ENCODE measurements at regions of chr15 and their contacts with region 1.

Region 1: GRCh38 chr15:44545913-44546802 is 9.2 kb downstream of the EIF3J start:
- DNase-seq: peak; percentile 37
- H3K4me3 ChIP-seq: no peak overlapping the region
- H3K27ac ChIP-seq: peak overlapping the region; percentile 9
- H3K4me1 ChIP-seq: peaks cover 17% of the 10 kb centered on the region
- H3K27me3 ChIP-seq: no peaks in the 10 kb centered on the region
- CTCF ChIP-seq: peak; percentile 21 to 26

Region 2: DNA sequence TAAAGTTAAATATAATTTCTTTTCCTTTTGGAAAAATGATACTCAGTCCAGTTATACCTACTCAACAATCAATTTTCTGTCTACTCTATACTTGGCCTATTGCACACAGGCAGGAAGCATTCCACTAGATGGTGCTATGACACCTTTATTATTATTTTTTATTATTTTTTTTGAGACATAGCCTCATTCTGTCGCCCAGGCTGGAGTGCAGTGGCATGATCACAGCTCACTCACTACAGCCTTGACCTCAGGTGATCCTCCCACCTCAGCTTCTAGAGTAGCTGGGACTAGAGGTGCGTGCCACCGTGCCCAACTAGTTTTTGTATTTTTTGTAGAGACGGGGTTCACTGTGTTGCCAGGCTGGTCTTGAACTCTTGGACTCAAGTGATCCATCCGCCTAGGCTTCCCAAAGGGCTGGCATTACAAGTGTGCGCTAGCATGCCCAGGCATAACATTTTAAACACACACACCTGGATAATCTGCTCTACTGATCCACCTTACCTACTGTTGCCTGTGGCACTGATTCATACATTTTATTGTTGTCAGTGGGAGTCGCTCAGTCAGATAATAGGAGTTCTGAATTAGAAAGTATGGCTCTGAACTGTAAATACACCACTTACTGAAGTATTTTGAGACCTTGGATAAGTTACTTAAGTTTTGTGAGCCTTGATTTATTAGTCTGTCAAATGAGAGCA is 47.0 kb after region 1 on chr15:
- CTCF ChIA-PET with region 1: no interaction called
- dilution Hi-C with region 1: loop called (anchors 10 kb)
- in situ Hi-C with region 1: no loop called
- intact Hi-C with region 1: no loop called
- DNase-seq: peak; percentile 16
- H3K4me3 ChIP-seq: no peak overlapping the region
- H3K27ac ChIP-seq: no peak overlapping the region
- H3K4me1 ChIP-seq: no peaks in the 10 kb centered on the region
- H3K27me3 ChIP-seq: no peaks in the 10 kb centered on the region
- CTCF ChIP-seq: peak; percentile 44 to 51